ENCODE measurements at regions of chr3 and their contacts with region 1.

Region 1: GRCh38 chr3:148955544-148956346 is 35.6 kb upstream of the GYG1 start:
- DNase-seq: peak; percentile 63
- H3K4me3 ChIP-seq: no peak overlapping the region
- H3K27ac ChIP-seq: no peak overlapping the region
- H3K4me1 ChIP-seq: no peaks in the 10 kb centered on the region
- H3K27me3 ChIP-seq: no peaks in the 10 kb centered on the region
- CTCF ChIP-seq: peak; percentile 77

Region 2: GRCh38 chr3:148911173-148911572 is 44.6 kb before region 1 on chr3:
- CTCF ChIA-PET with region 1: interaction called, 10 read pairs
- POLR2A ChIA-PET with region 1: no interaction called
- intact Hi-C with region 1: no loop called
- DNase-seq: no peak
- H3K4me3 ChIP-seq: no peak overlapping the region
- H3K27ac ChIP-seq: no peak overlapping the region
- H3K4me1 ChIP-seq: no peaks in the 10 kb centered on the region
- H3K27me3 ChIP-seq: no peaks in the 10 kb centered on the region
- CTCF ChIP-seq: no peak

Region 3: GRCh38 chr3:149248031-149248691 is 292.4 kb after region 1 on chr3:
- CTCF ChIA-PET with region 1: interaction called, 10 read pairs
- POLR2A ChIA-PET with region 1: no interaction called
- intact Hi-C with region 1: no loop called
- DNase-seq: no peak
- H3K4me3 ChIP-seq: no peak overlapping the region
- H3K27ac ChIP-seq: no peak overlapping the region
- H3K4me1 ChIP-seq: no peaks in the 10 kb centered on the region
- H3K27me3 ChIP-seq: no peaks in the 10 kb centered on the region
- CTCF ChIP-seq: no peak

Region 4: GRCh38 chr3:149339931-149340309 is 384.2 kb after region 1 on chr3:
- CTCF ChIA-PET with region 1: no interaction called
- POLR2A ChIA-PET with region 1: no interaction called
- intact Hi-C with region 1: loop called (anchors 5 kb)
- DNase-seq: peak; percentile 93
- H3K4me3 ChIP-seq: no peak overlapping the region
- H3K27ac ChIP-seq: peak overlapping the region; percentile 61
- H3K4me1 ChIP-seq: peaks cover 8% of the 10 kb centered on the region
- H3K27me3 ChIP-seq: no peaks in the 10 kb centered on the region
- CTCF ChIP-seq: no peak

Region 5: GRCh38 chr3:149480325-149481017 is 524.7 kb after region 1 on chr3:
- CTCF ChIA-PET with region 1: no interaction called
- POLR2A ChIA-PET with region 1: no interaction called
- intact Hi-C with region 1: loop called (anchors 5 kb)
- DNase-seq: peak; percentile 67
- H3K4me3 ChIP-seq: no peak overlapping the region
- H3K27ac ChIP-seq: no peak overlapping the region
- H3K4me1 ChIP-seq: no peaks in the 10 kb centered on the region
- H3K27me3 ChIP-seq: no peaks in the 10 kb centered on the region
- CTCF ChIP-seq: peak; percentile 89

Region 6: DNA sequence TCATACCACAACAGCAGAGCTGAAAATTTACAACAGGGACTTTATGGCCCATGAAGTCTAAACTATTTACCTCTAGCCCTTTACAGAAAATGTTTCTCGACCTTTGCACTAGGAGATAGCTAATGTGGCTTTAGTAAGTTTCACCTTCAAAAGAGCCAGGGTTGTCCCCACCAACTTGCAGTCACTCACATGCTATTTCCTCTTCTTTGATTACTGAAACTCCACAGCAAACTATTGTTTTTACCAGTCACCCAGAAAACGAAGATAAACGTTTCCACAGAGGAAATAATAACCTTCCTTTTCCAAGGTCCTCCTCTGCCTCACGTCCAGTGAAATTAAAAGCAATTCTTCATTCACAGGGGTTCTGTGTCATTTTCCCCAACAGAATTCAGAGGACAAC is 653.9 kb after region 1 on chr3:
- CTCF ChIA-PET with region 1: no interaction called
- POLR2A ChIA-PET with region 1: no interaction called
- intact Hi-C with region 1: no loop called
- DNase-seq: no peak
- H3K4me3 ChIP-seq: no peak overlapping the region
- H3K27ac ChIP-seq: no peak overlapping the region
- H3K4me1 ChIP-seq: peaks cover 49% of the 10 kb centered on the region
- H3K27me3 ChIP-seq: no peaks in the 10 kb centered on the region
- CTCF ChIP-seq: no peak

Measured in A673 (cell line).